Natural killer cell (primary cell): ENCODE measurements at regions of chr15 and their contacts with region 1.

Region 1: GRCh38 chr15:40274350-40275274 is 8.3 kb downstream of the ANKRD63 start:
- DNase-seq: peak; percentile 86 to 95
- ATAC-seq: peak; percentile 85 to 92 (median 88)
- H3K4me3 ChIP-seq: no peak overlapping the region
- H3K4me3 Mint-ChIP-seq: no peak overlapping the region
- H3K27ac ChIP-seq: no peak overlapping the region
- H3K27ac Mint-ChIP-seq: peak overlapping the region in 1 of 2 donors; percentile 45
- H3K4me1 ChIP-seq: peaks cover 24% of the 10 kb centered on the region
- H3K4me1 Mint-ChIP-seq: peaks cover 0 to 10% of the 10 kb centered on the region in 2 donors
- H3K27me3 ChIP-seq: peaks cover 8% of the 10 kb centered on the region
- H3K27me3 Mint-ChIP-seq: peaks cover 11 to 17% of the 10 kb centered on the region in 2 donors
- CTCF ChIP-seq: peak; percentile 100

Region 2: DNA sequence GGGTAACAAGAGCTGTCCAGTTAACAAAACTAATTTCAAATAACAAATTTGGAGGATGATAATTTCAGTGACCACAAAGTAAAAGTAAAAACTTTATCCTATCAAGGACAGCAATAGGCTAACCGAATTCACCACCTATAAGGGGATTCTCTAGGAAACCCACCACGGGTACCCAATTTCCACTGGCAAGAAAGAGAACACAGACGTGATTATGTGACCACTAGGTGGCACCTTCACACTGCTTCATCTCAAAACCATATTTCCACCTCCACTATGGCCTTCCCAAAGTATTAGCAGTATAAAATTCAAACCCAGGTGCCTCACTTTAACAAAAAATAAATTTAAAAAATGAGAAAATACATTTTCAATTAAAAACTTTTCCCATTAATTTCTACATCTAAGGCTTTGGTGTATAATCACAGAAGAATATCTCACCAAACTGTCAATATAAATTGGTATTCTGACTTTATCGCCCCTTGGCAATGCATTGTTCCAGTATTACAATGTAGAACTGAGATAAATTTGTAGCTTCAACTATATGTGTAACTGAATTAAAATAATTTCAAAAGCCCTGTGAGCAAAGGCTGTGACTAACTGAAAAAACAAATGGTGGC is 588.5 kb before region 1 on chr15:
- intact Hi-C with region 1: loop called (anchors 5 kb)
- DNase-seq: peak in 1 of 2 donors; percentile 74
- ATAC-seq: peak in 2 of 3 donors; percentile 69 to 74
- H3K4me3 ChIP-seq: no peak overlapping the region
- H3K4me3 Mint-ChIP-seq: no peak overlapping the region
- H3K27ac ChIP-seq: no peak overlapping the region
- H3K27ac Mint-ChIP-seq: peak overlapping the region; percentile 16 to 44
- H3K4me1 ChIP-seq: peaks cover 3% of the 10 kb centered on the region
- H3K4me1 Mint-ChIP-seq: peaks cover 12 to 27% of the 10 kb centered on the region in 2 donors
- H3K27me3 ChIP-seq: no peaks in the 10 kb centered on the region
- H3K27me3 Mint-ChIP-seq: no peaks in the 10 kb centered on the region
- CTCF ChIP-seq: peak; percentile 96

Region 3: DNA sequence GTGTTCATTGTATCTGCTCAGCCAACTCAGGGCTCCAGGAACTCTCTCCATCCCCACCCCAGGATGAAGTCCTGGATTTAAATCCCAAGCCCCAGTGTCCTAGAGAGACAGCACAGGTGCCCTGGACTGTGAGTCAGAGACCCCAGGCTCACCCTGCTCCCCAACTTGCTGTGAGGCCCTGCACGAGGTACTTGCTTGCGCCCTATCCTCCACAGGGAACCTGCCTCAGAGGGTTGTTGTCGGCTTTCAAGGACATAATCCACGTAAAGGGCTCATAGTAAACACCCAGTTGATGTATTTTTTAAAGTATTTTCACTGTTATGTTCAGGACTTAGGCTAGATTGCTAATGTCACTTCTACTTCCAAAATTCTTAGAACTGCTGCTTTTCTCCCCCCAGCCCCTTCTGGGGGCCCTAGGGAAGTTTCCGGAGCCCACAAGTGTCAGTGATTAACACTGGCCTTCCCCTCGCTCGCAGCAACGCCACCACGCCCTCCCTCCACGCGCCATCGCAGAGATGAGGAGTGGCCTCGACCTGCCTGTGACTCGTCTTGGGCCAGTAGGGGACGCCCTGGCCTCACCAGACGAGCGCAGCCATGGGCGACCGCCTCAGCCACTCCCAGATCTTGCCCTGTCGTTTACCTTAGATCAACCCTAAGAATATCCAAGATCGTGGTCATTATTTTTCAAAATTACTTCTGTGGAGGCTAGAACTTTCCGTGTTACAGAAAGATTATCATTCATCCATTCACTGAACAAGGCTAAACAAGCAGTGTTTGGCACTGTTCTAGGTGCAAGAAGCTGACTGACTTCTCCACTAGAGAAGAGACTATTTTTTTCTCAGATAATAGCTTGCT is 229.7 kb before region 1 on chr15:
- intact Hi-C with region 1: loop called (anchors 1 kb)
- DNase-seq: peak; percentile 75 to 90
- ATAC-seq: peak; percentile 91 to 97 (median 94)
- H3K4me3 ChIP-seq: no peak overlapping the region
- H3K4me3 Mint-ChIP-seq: peak overlapping the region; percentile 45
- H3K27ac ChIP-seq: no peak overlapping the region
- H3K27ac Mint-ChIP-seq: peak overlapping the region; percentile 60 to 83
- H3K4me1 ChIP-seq: peaks cover 43% of the 10 kb centered on the region
- H3K4me1 Mint-ChIP-seq: peaks cover 29 to 46% of the 10 kb centered on the region in 2 donors
- H3K27me3 ChIP-seq: no peaks in the 10 kb centered on the region
- H3K27me3 Mint-ChIP-seq: no peaks in the 10 kb centered on the region
- CTCF ChIP-seq: peak; percentile 78

Region 4: GRCh38 chr15:40238532-40239403 is 35.8 kb before region 1 on chr15 and contains the start of gene PAK6:
- intact Hi-C with region 1: loop called (anchors 5 kb)
- DNase-seq: peak in 1 of 2 donors; percentile 39
- ATAC-seq: peak; percentile 48 to 78 (median 72)
- H3K4me3 ChIP-seq: no peak within 1 kb of the TSS
- H3K4me3 Mint-ChIP-seq: peak within 1 kb of the TSS; percentile 59
- H3K27ac ChIP-seq: no peak within 1 kb of the TSS
- H3K27ac Mint-ChIP-seq: peak within 1 kb of the TSS in 1 of 2 donors; percentile 59
- H3K4me1 ChIP-seq: peaks cover 16% of the 10 kb centered on the region
- H3K4me1 Mint-ChIP-seq: peaks cover 7 to 11% of the 10 kb centered on the region in 2 donors
- H3K27me3 ChIP-seq: peaks cover 13% of the 10 kb centered on the region
- H3K27me3 Mint-ChIP-seq: peaks cover 16 to 25% of the 10 kb centered on the region in 2 donors
- CTCF ChIP-seq: no peak
- total RNA-seq, gene PAK6: 7.6 to 10.9 (median 7.9) TPM

Region 5: DNA sequence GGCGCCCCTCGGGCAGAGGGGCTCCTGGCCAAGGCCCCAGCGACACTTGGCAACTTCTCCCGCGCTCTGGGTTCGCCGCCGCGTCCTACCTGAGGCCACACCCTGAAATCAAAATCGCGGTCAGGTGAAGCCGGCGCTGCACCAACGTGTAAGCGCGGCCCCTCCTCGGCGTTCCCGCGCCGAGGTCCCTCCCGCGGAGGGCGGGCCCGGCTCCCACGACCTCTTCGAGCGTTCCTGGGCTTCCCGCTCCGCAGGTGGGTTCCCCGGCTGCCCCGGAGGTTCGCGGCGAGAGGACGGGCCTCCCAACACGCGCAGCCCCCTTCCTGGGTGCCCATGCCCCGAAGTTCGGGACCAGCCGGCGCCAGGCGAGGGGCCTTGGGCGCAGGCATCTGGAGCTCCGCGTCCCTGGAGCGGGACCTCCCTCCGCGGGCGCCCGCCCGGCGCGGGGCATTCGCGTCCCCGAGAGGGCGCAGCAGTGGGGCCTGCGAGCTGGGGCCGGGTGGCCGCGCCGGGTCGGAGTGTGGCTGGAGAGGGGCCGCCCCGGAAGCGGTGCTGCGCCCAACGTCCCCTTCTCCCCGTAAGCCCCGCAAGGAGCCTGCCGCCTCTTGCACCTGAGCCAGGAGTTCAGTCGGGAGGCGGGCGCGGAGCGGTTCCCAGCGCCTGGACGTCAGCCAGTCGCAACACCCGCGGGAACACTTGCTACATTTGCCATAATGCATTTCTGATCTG is 22.0 kb before region 1 on chr15:
- intact Hi-C with region 1: no loop called
- DNase-seq: peak in 1 of 2 donors; percentile 30
- ATAC-seq: peak; percentile 31 to 56 (median 49)
- H3K4me3 ChIP-seq: peak overlapping the region; percentile 53
- H3K4me3 Mint-ChIP-seq: peak overlapping the region; percentile 91
- H3K27ac ChIP-seq: no peak overlapping the region
- H3K27ac Mint-ChIP-seq: peak overlapping the region; percentile 70 to 72
- H3K4me1 ChIP-seq: peaks cover 41% of the 10 kb centered on the region
- H3K4me1 Mint-ChIP-seq: peaks cover 11 to 17% of the 10 kb centered on the region in 2 donors
- H3K27me3 ChIP-seq: peaks cover 9% of the 10 kb centered on the region
- H3K27me3 Mint-ChIP-seq: peaks cover 10 to 23% of the 10 kb centered on the region in 2 donors
- CTCF ChIP-seq: no peak

Region 6: DNA sequence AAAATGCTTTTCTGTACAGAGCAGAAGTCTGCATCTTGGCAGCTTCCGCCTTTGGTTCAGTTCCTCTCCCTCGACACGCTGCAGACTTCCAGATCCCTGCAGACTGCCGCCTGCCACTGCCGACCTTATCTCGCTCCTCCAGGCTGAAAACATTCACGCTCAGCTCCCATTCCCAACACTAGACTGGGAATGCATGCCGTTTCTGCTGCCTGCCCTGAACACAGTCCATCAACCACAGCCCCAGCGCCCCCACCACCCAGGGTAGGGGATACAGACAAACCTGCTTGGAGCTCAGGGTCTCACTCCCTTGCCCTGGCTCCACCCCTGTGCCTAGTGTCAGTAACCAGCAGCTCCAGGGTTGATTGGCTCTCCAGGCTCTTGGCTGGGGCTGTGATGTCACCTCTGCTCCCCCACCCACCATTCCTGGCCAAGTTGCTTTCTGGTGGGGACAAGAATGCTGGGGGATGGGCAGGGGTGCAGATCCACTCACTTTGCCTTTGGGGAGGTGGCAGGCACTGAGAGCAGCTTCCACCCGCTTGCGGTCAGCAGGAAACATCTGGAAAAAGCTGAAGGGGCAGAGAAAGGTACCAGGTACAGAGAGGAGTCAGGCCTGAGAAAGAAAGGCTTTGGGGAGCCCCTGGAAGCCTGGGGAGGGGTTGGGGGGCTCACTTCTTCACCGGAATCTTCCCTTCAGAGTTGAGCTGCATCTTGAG is 27.0 kb after region 1 on chr15:
- intact Hi-C with region 1: no loop called
- DNase-seq: no peak
- ATAC-seq: no peak
- H3K4me3 ChIP-seq: no peak overlapping the region
- H3K4me3 Mint-ChIP-seq: no peak overlapping the region
- H3K27ac ChIP-seq: no peak overlapping the region
- H3K27ac Mint-ChIP-seq: no peak overlapping the region
- H3K4me1 ChIP-seq: peaks cover 26% of the 10 kb centered on the region
- H3K4me1 Mint-ChIP-seq: peaks cover 41 to 45% of the 10 kb centered on the region in 2 donors
- H3K27me3 ChIP-seq: no peaks in the 10 kb centered on the region
- H3K27me3 Mint-ChIP-seq: no peaks in the 10 kb centered on the region
- CTCF ChIP-seq: no peak

Region 7: GRCh38 chr15:40338041-40338657 is 63.5 kb after region 1 on chr15:
- intact Hi-C with region 1: loop called (anchors 1 kb)
- DNase-seq: peak; percentile 67 to 89
- ATAC-seq: peak; percentile 84 to 96 (median 94)
- H3K4me3 ChIP-seq: no peak overlapping the region
- H3K4me3 Mint-ChIP-seq: no peak overlapping the region
- H3K27ac ChIP-seq: no peak overlapping the region
- H3K27ac Mint-ChIP-seq: no peak overlapping the region
- H3K4me1 ChIP-seq: peaks cover 38% of the 10 kb centered on the region
- H3K4me1 Mint-ChIP-seq: peaks cover 0 to 19% of the 10 kb centered on the region in 2 donors
- H3K27me3 ChIP-seq: no peaks in the 10 kb centered on the region
- H3K27me3 Mint-ChIP-seq: peaks cover 0 to 2% of the 10 kb centered on the region in 2 donors
- CTCF ChIP-seq: peak; percentile 91